ENCODE measurements at regions of chr6 and their contacts with region 1.

Region 1: GRCh38 chr6:16277101-16277981 is 39.0 kb downstream of the GMPR start:
- DNase-seq: peak; percentile 83
- ATAC-seq: peak; percentile 96
- H3K4me3 ChIP-seq: peak overlapping the region in 1 of 2 experiments; percentile 50; a peak in 3 of 4 replicates
- H3K27ac ChIP-seq: peak overlapping the region; percentile 74
- H3K4me1 ChIP-seq: peaks cover 26 to 27% of the 10 kb centered on the region in 2 experiments
- H3K27me3 ChIP-seq: no peaks in the 10 kb centered on the region
- CTCF ChIP-seq: peak; percentile 69 to 85 (median 80)
- POLR2A ChIP-seq: no peak
- RAD21 ChIP-seq: peak; percentile 84

Region 2: DNA sequence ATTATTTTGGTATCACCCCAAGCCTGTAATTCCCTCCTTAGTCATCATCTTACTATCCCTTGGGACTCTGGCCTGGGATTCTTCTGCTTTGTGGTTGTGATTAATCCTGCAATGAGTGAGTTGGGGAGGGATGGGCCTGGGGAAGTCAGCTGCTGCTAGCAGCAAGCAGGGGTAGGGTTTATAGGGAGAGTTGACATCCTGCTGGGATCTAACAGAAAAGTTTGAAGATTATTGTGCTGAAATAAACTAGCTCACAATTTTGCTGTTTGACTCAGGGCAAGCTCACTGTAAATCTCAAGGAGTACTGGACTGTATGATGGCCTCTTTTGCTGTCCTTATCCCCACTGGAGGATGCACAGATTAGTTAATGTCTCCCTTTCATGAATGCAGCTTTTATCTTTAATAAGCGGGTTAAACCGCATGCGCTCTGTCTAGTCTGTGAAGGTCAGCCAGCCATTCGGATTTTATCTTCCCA is 948.1 kb before region 1 on chr6:
- CTCF ChIA-PET with region 1: no interaction called
- POLR2A ChIA-PET with region 1: no interaction called
- RAD21 ChIA-PET with region 1: no interaction called
- intact Hi-C with region 1: no loop called
- DNase-seq: no peak
- ATAC-seq: peak; percentile 37; the same call in 1 of the 2 replicates
- H3K4me3 ChIP-seq: no peak overlapping the region
- H3K27ac ChIP-seq: no peak overlapping the region
- H3K4me1 ChIP-seq: peaks cover 10 to 38% of the 10 kb centered on the region in 2 experiments
- H3K27me3 ChIP-seq: no peaks in the 10 kb centered on the region
- CTCF ChIP-seq: no peak
- POLR2A ChIP-seq: no peak
- RAD21 ChIP-seq: no peak

Region 3: GRCh38 chr6:16238963-16239797 is 38.2 kb before region 1 on chr6:
- CTCF ChIA-PET with region 1: interaction called, 9 read pairs
- POLR2A ChIA-PET with region 1: no interaction called
- RAD21 ChIA-PET with region 1: interaction called in 1 of 2 experiments, 4 read pairs
- intact Hi-C with region 1: loop called (anchors 1 kb)
- DNase-seq: no peak
- ATAC-seq: peak; percentile 42
- H3K4me3 ChIP-seq: peak overlapping the region; percentile 74 to 90
- H3K27ac ChIP-seq: peak overlapping the region; percentile 57
- H3K4me1 ChIP-seq: peaks cover 10 to 15% of the 10 kb centered on the region in 2 experiments
- H3K27me3 ChIP-seq: no peaks in the 10 kb centered on the region
- CTCF ChIP-seq: peak; percentile 45 to 66 (median 55); a peak in 5 of 6 replicates
- POLR2A ChIP-seq: no peak
- RAD21 ChIP-seq: peak; percentile 59